Activated CD8-positive, alpha-beta T cell treated with anti-CD3 and anti-CD28 coated beads, Interleukin-2, amount 10 ng/mL, durations not matched to agents 7 days and 5 days (primary cell): ENCODE measurements at regions of chr6 and their contacts with region 1.

Region 1: GRCh38 chr6:122381497-122382265 is 17.8 kb upstream of the HSF2 start:
- DNase-seq: peak; percentile 71
- ATAC-seq: peak; percentile 91
- H3K4me3 Mint-ChIP-seq: no peak overlapping the region
- H3K27ac Mint-ChIP-seq: no peak overlapping the region
- H3K4me1 Mint-ChIP-seq: no peaks in the 10 kb centered on the region
- H3K27me3 Mint-ChIP-seq: peaks cover 8% of the 10 kb centered on the region

Region 2: GRCh38 chr6:122399384-122400158 is 17.9 kb after region 1 on chr6 and contains the start of gene HSF2:
- CTCF ChIA-PET with region 1: interaction called, 10 read pairs
- POLR2A ChIA-PET with region 1: no interaction called
- DNase-seq: peak; percentile 96
- ATAC-seq: peak; percentile 100
- H3K4me3 Mint-ChIP-seq: peak within 1 kb of the TSS; percentile 98
- H3K27ac Mint-ChIP-seq: peak within 1 kb of the TSS; percentile 96
- H3K4me1 Mint-ChIP-seq: peaks cover 36% of the 10 kb centered on the region
- H3K27me3 Mint-ChIP-seq: no peaks in the 10 kb centered on the region
- total RNA-seq, gene HSF2: 14.6 to 17.6 TPM

Region 3: DNA sequence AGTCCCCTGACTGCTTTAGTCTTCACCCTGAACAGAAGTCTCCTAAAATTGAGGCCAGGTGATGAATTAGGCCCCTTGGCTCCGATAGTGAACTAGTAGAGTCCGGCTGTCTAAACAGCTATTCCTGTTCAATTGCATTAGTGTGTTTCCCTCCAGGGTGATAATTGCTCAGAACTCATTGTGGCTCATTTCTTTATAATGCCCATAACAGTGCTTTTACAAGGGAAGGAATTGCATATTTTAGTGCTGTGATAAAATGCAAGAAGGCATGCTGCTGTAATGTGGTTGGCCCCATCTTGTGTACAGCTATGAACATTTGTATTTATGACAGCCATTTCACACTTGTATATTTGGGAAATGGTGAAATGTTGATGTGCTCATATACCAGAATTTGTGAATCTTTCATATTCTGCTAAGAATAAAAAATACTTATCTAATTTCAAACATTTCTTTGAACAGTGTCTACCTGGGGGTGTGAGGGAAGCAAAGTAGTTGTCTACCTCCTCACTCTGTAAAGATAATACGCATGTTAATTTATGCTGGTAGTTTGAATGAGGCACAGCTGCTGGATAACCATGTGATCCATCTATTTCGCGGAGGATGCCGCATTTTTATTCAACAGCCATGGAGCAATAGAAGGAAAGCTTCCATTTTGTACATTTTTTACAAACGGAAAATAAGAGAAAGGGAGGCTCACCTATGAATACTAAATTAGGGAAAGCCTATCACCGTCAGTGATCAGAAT is 1873.4 kb after region 1 on chr6:
- CTCF ChIA-PET with region 1: no interaction called
- POLR2A ChIA-PET with region 1: no interaction called
- DNase-seq: no peak
- ATAC-seq: no peak
- H3K4me3 Mint-ChIP-seq: no peak overlapping the region
- H3K27ac Mint-ChIP-seq: no peak overlapping the region
- H3K4me1 Mint-ChIP-seq: no peaks in the 10 kb centered on the region
- H3K27me3 Mint-ChIP-seq: no peaks in the 10 kb centered on the region